AG04449 (cell line): ENCODE measurements at regions of chr17 and their contacts with region 1.

Region 1: DNA sequence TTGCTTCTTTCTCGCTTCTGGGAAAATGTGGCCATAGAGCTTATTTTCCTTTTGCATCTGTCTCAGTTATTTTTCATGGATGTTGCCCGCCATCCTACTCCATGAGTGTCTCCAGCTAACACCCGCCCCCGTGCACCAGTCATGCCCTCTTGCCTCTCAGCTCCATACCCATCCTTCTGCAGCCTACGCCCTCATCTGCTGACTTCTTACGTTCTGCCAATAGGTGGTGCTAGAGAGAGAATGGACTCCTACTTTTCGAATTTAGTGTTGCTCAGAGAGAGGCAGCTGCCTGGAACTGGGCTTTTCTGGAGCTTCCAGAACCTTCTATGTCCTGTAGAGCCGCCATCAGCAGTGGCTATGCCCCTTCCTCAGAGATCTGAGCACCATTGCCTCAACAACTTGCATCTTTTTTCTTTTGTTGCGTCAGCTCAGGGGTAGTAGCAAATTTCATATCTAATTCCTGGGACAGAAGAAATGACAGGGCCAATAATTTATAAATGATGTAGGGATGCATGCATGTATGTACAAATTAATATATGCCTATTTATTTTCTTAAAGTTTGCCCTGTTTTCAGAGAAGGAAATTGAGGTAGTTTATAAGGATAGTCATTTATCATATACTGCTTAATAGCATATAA is 119.7 kb upstream of the MYOCD start:
- DNase-seq: no peak
- H3K4me3 ChIP-seq: no peak overlapping the region
- CTCF ChIP-seq: peak; percentile 83

Region 2: GRCh38 chr17:12187658-12188057 is 358.3 kb before region 1 on chr17:
- CTCF ChIA-PET with region 1: no interaction called
- POLR2A ChIA-PET with region 1: no interaction called
- DNase-seq: no peak
- H3K4me3 ChIP-seq: no peak overlapping the region
- CTCF ChIP-seq: no peak

Region 3: DNA sequence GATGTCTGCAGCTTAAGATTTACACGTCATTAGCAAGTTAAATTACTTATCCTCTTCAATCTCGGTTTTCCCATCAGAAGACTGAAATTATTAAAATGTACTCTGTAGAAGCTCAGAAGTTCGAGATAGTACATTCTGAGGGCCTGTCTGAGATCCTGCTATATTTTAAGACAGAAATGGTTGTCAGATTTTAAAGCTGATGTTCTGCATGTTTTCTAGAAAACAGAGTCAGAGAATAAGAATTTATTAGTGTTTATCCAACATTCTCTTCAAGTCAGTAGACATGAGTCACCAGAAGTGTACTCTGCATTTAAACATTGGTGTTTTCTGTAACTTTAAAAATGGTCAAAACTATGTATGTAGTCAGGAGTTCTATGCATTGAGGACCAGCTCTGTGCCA is 35.5 kb before region 1 on chr17:
- CTCF ChIA-PET with region 1: interaction called, 26 read pairs
- POLR2A ChIA-PET with region 1: interaction called, 6 read pairs
- DNase-seq: no peak
- H3K4me3 ChIP-seq: no peak overlapping the region
- CTCF ChIP-seq: no peak

Region 4: GRCh38 chr17:12530161-12530560 is 15.8 kb before region 1 on chr17:
- CTCF ChIA-PET with region 1: interaction called, 44 read pairs
- POLR2A ChIA-PET with region 1: no interaction called
- DNase-seq: no peak
- H3K4me3 ChIP-seq: no peak overlapping the region
- CTCF ChIP-seq: no peak

Region 5: DNA sequence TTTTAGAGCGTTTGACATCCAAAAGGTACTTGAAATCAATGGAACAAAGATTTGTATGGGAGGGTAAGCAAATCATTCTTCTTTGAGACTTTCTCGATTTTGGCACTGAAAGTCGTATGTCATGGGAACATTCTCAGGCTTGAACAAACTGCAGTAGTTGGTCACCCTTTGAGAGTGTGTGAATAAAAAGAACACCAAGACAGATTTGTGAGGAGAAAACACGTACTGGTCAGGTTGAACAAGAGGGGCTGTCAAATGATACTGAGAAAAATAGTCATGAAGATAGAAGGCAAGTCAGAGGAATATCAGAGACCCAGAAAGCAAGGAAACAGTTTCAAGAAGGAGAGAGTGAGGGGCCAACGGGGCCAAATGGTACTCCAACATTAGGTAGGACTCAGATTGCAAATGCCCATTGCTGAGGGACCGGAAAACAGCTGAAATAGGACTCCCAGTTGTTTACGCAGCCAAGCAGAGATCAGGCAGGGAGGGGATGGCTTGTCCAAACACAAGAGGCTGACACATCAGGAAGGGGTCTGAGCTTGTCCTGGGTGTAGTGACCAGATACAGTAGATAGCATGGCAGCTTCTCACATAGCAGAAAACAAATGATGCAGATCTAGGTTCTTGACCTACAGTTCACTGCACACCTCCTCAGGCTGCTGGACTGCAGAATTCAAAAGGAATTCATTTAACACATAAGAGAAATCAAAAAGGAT is 45.2 kb after region 1 on chr17:
- CTCF ChIA-PET with region 1: interaction called, 14 read pairs
- POLR2A ChIA-PET with region 1: no interaction called
- DNase-seq: no peak
- H3K4me3 ChIP-seq: no peak overlapping the region
- CTCF ChIP-seq: no peak

Region 6: GRCh38 chr17:12627781-12628451 is 81.9 kb after region 1 on chr17:
- CTCF ChIA-PET with region 1: interaction called, 11 read pairs
- POLR2A ChIA-PET with region 1: no interaction called
- DNase-seq: no peak
- H3K4me3 ChIP-seq: no peak overlapping the region
- CTCF ChIP-seq: no peak

Region 7: GRCh38 chr17:12687688-12688087 is 141.7 kb after region 1 on chr17:
- CTCF ChIA-PET with region 1: no interaction called
- POLR2A ChIA-PET with region 1: no interaction called
- DNase-seq: no peak
- H3K4me3 ChIP-seq: no peak overlapping the region
- CTCF ChIP-seq: no peak

Region 8: GRCh38 chr17:12744298-12744697 is 198.3 kb after region 1 on chr17:
- CTCF ChIA-PET with region 1: interaction called, 16 read pairs
- POLR2A ChIA-PET with region 1: no interaction called
- DNase-seq: no peak
- H3K4me3 ChIP-seq: no peak overlapping the region
- CTCF ChIP-seq: no peak

Region 9: DNA sequence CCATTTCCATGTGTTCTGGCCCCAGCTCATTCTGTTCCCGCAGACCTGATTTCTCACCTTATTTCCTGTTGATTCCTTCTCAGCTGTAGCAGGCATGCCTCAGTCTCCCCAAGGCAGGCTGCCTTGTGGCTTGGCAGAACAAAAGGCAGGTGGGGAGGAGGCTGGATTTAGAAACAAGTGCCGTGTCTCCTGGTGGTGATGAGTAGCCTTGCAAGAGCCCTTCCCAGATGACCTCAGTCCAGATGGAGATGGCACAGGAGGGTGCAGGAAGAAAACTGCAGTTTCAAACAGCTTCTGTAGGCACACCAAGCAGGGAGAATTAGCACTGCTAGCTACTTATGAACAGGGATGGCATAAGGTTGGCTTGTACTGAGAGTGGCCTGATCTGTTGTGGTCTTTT is 307.9 kb after region 1 on chr17:
- CTCF ChIA-PET with region 1: no interaction called
- POLR2A ChIA-PET with region 1: no interaction called
- DNase-seq: no peak
- H3K4me3 ChIP-seq: no peak overlapping the region
- CTCF ChIP-seq: no peak